Activated T-helper 2 cell treated with anti-CD3 and anti-CD28 coated beads, Interferon-gamma antibody, Interleukin-2, Interleukin-4, amounts not matched to agents 10 μg/mL and 5 μg/mL and 100 μg/mL, durations not matched to agents 14 hours and 24 hours and 36 hours (primary cell): ENCODE measurements at regions of chr1 and their contacts with region 1.

Region 1: GRCh38 chr1:220089650-220090556 is at the start of gene BPNT1:
- DNase-seq: peak; percentile 97
- H3K4me3 Mint-ChIP-seq: peak within 1 kb of the TSS; percentile 91
- H3K27ac Mint-ChIP-seq: peak within 1 kb of the TSS; percentile 88
- H3K4me1 Mint-ChIP-seq: peaks cover 9% of the 10 kb centered on the region
- H3K27me3 Mint-ChIP-seq: no peaks in the 10 kb centered on the region
- total RNA-seq, gene BPNT1: 29.8 and 30.6 TPM in 2 replicates

Region 2: GRCh38 chr1:219990782-219991510 is 99.0 kb before region 1 on chr1:
- intact Hi-C with region 1: loop called (anchors 2 kb)
- DNase-seq: no peak
- H3K4me3 Mint-ChIP-seq: no peak overlapping the region
- H3K27ac Mint-ChIP-seq: no peak overlapping the region
- H3K4me1 Mint-ChIP-seq: no peaks in the 10 kb centered on the region
- H3K27me3 Mint-ChIP-seq: no peaks in the 10 kb centered on the region

Region 3: DNA sequence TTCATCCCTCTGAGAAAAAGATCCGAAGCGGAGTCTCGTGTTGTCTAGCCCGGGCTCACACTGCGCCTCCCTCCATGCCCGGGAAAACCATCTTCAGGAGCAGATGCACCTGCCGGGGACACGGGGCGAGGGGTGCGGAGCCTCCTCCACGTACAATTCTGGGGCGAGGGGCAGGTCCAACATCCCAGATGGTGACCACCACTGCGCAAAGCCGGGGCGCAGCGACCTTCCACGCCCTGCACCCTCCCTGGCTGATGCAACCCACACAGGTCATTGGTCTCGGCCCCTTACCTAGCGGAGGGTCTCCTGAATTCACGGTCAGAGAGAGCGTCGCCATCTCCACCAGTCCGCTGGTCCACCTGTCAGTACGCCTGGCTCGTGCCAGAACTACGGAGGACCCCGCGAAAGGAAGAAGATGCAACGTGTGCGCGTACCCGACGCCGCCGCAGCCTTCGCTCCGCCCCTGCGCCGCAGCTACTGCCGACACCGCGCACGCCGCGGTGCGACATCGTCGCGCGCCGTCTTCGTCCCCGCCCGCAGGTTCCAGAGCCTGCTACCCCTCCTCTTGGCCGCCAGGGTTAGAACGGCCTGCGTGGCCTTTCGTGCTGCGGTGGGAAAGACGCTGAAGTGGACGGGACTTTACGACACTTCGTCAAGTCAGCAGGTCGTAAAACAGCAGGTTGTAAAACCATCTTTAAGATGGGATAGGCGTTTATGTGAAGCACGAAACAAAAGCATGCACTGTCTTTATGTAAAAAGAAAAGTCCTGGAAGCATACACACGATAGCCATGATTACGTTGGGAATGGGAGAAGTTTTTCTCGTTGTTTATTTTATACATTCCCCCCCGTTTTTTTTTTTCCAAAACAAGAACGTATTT is 43.6 kb before region 1 on chr1 and contains the start of gene EPRS1:
- intact Hi-C with region 1: loop called (anchors 1 kb)
- DNase-seq: peak; percentile 95
- H3K4me3 Mint-ChIP-seq: peak within 1 kb of the TSS; percentile 92
- H3K27ac Mint-ChIP-seq: peak within 1 kb of the TSS; percentile 96
- H3K4me1 Mint-ChIP-seq: peaks cover 22% of the 10 kb centered on the region
- H3K27me3 Mint-ChIP-seq: no peaks in the 10 kb centered on the region
- total RNA-seq, gene EPRS1: 163 and 176 TPM in 2 replicates

Region 4: DNA sequence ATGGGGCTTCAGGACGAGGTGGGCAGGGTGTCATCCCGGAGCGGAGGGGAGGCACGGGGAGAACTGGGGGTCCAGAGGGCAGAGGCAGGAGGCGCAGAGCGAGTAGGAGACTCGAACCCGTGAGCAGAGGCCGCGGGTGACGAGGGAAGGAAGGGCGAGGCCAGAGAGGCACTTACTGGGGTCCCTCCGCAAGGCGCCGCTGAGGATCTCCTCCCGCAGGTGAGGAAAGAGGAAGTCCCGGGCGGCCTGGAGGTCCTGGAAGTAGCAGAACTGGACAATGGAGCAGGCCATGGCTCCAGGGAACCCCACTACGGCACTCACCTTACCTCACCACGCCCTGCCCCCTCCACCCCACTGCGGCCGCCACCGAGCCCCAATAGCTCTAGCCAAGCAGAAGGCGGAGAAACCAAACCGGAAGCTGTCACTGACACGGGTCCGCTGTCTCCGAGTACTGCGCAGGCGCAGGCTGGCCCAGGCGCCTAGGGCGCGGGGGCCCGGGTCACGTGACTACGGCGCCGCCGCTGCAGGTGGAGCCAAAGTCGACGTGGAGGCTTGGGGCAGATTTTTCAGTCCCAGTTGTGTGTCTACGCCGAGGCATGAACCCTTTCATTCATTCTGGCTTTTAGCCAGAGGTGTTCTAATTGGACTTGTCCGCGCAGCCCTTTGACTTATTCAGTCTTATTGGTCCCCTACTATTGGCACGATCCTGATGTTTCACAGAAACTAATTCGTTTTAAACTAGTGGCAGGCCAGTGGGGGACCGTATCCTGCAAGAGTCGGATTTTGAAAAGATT is 182.3 kb after region 1 on chr1 and contains the start of gene RAB3GAP2:
- intact Hi-C with region 1: loop called (anchors 1 kb)
- DNase-seq: peak; percentile 97
- H3K4me3 Mint-ChIP-seq: no peak within 1 kb of the TSS
- H3K27ac Mint-ChIP-seq: no peak within 1 kb of the TSS
- H3K4me1 Mint-ChIP-seq: peaks cover 14% of the 10 kb centered on the region
- H3K27me3 Mint-ChIP-seq: peaks cover 12% of the 10 kb centered on the region
- total RNA-seq, gene RAB3GAP2: 52.8 and 60.7 TPM in 2 replicates

Region 5: GRCh38 chr1:221022346-221022745 is 932.4 kb after region 1 on chr1:
- intact Hi-C with region 1: no loop called
- DNase-seq: no peak
- H3K4me3 Mint-ChIP-seq: no peak overlapping the region
- H3K27ac Mint-ChIP-seq: no peak overlapping the region
- H3K4me1 Mint-ChIP-seq: no peaks in the 10 kb centered on the region
- H3K27me3 Mint-ChIP-seq: no peaks in the 10 kb centered on the region